Activated CD4-positive, alpha-beta memory T cell treated with anti-CD3 and anti-CD28 coated beads for 36 hours (primary cell): ENCODE measurements at regions of chr6 and their contacts with region 1.

Region 1: DNA sequence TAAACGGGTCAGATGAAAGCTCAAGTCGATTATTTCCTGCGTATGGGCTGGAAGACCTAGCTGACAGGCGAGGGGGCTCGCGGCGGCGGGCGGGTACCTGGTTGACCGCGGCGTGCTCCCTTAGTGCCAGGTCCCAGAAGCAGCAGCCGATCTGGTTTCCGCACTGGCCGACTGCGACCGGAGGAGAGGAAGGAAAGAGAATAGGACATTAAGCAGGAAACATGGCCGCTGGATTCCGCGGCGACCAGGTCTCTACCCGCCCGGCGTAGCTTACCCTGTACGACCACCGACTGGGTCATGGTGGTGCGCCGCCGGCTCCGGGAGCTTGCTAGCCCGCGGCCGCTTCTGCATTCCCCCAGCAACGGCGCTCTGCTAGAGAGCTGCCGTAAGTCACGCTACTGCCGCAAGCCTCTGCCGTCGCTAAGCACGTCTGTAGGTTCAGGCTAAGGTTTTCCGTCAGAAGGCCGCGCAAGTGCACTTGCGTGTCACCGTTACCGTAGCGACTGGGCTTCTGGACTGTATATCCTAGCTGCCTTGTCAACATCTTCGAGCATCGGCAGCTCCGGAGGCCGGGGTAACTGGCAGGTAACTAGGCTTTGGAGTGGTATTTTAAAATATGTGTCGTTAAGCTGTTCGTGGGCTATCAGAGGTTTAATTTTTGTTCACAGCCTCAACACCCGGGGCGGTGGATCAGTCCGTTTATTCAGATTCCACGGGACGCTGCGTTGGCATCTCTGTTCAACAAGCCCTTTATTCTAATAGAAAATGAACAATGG is at the starts of genes FAM229B and TUBE1:
- DNase-seq: peak; percentile 94
- H3K4me3 Mint-ChIP-seq: no peak within 1 kb of the TSS
- H3K27ac Mint-ChIP-seq: no peak within 1 kb of the TSS
- H3K4me1 Mint-ChIP-seq: peaks cover 9% of the 10 kb centered on the region
- H3K27me3 Mint-ChIP-seq: peaks cover 11% of the 10 kb centered on the region
- total RNA-seq, gene FAM229B: 6.7 to 7.3 TPM
- total RNA-seq, gene TUBE1: 37.2 to 39.2 TPM

Region 2: DNA sequence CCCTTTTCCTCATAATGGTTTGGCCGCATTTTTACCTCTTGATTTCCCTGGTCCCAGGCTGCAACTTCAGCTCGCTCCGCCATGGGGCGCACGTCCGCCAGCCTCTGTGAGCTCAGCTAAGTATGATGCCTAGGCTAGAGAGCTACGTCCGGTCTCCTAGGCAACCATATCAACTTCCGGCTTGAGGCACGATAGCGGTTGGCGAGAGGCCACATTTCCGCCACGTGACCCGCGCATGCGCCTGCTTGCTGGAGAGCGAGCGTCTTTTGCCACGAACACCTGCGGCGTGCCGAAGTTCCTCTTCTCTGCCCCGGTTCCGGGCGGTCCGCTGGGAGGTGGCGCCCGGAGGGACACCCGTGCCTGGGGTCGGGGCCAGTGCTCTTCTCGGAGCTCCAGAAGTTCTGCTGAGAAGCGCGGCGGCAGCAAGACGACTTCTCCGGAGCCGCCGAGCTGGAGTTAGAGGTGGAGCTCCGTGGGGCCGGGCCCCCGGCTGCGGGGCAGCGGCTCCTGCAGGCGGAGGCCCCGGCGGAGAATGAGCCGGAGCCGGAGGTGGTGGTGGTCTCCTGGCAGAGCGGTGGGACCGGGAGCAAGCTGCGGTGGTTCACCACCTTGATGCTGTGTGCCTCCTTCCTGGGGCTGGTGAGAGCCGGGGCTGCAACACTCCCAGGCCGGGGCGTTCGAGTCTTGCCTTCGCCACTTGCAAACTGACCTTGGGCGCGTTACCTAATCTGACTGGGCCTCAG is 828.1 kb before region 1 on chr6:
- CTCF ChIA-PET with region 1: interaction called, 9 read pairs
- POLR2A ChIA-PET with region 1: interaction called, 5 read pairs
- intact Hi-C with region 1: loop called (anchors 1 kb)
- DNase-seq: peak; percentile 99
- H3K4me3 Mint-ChIP-seq: peak overlapping the region; percentile 76
- H3K27ac Mint-ChIP-seq: peak overlapping the region; percentile 79
- H3K4me1 Mint-ChIP-seq: peaks cover 31% of the 10 kb centered on the region
- H3K27me3 Mint-ChIP-seq: peaks cover 2% of the 10 kb centered on the region

Region 3: DNA sequence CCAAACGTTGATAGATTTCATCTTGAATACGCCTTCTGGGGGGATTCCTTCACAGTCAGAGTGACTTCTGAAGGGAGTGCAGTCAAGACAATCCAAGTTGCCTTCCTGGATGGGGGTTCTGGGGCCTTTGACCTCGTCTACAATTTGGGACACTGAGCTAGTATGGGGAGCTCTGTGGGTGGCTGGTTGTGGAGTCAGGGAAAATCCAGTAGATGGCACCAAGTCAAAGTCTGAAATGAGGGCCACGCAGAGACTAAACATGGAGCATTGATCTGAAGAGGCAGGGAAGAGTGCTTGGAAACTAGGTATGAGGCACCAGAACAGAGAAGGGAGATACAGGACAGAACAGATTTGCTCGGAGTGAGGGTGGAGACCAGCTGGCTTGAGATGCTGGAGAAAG is 77.0 kb before region 1 on chr6:
- CTCF ChIA-PET with region 1: interaction called, 3 read pairs
- POLR2A ChIA-PET with region 1: no interaction called
- intact Hi-C with region 1: loop called (anchors 2 kb)
- DNase-seq: peak; percentile 49
- H3K4me3 Mint-ChIP-seq: no peak overlapping the region
- H3K27ac Mint-ChIP-seq: no peak overlapping the region
- H3K4me1 Mint-ChIP-seq: peaks cover 32% of the 10 kb centered on the region
- H3K27me3 Mint-ChIP-seq: no peaks in the 10 kb centered on the region

Region 4: GRCh38 chr6:112066606-112067005 is 20.7 kb before region 1 on chr6:
- CTCF ChIA-PET with region 1: interaction called, 15 read pairs
- POLR2A ChIA-PET with region 1: interaction called, 4 read pairs
- intact Hi-C with region 1: no loop called
- DNase-seq: no peak
- H3K4me3 Mint-ChIP-seq: no peak overlapping the region
- H3K27ac Mint-ChIP-seq: no peak overlapping the region
- H3K4me1 Mint-ChIP-seq: no peaks in the 10 kb centered on the region
- H3K27me3 Mint-ChIP-seq: no peaks in the 10 kb centered on the region

Region 5: GRCh38 chr6:112153926-112154607 is 66.7 kb after region 1 on chr6:
- CTCF ChIA-PET with region 1: interaction called, 9 read pairs
- POLR2A ChIA-PET with region 1: no interaction called
- intact Hi-C with region 1: loop called (anchors 2 kb)
- DNase-seq: no peak
- H3K4me3 Mint-ChIP-seq: no peak overlapping the region
- H3K27ac Mint-ChIP-seq: peak overlapping the region; percentile 67
- H3K4me1 Mint-ChIP-seq: peaks cover 25% of the 10 kb centered on the region
- H3K27me3 Mint-ChIP-seq: peaks cover 12% of the 10 kb centered on the region

Region 6: DNA sequence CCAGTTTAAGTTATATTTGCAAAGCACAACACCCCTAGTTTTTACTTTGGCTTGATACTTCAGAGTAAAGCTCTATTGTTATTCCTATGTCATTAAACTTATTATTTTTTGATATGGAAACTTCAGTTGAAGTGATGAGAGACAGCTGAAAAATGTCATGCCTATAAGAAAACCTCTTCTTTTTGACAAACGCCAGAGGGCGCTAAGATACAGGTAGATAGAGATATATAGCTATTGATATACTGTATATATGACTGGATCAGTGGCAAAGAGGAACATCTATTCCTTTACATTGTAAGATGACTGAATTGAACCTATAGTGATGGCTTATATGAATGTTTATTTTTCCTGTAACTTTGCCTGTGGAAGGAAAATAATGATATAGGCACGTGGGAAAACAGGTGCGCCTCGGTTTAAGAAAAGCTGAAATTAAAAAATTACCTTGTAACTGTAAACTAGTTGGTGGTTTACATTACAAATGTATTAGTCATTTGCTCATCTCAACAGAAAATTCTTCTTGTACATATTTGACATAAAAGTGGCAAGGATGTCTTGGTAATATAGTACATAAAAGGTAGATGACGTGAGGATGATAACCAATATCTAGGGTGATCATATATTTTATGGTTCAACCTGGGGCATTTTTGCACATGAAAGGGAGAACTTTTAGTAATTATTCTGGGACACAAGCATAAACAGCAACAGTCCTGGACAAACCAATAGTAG is 92.9 kb after region 1 on chr6:
- CTCF ChIA-PET with region 1: interaction called, 10 read pairs
- POLR2A ChIA-PET with region 1: no interaction called
- intact Hi-C with region 1: no loop called
- DNase-seq: peak; percentile 26
- H3K4me3 Mint-ChIP-seq: no peak overlapping the region
- H3K27ac Mint-ChIP-seq: no peak overlapping the region
- H3K4me1 Mint-ChIP-seq: no peaks in the 10 kb centered on the region
- H3K27me3 Mint-ChIP-seq: peaks cover 16% of the 10 kb centered on the region

Region 7: DNA sequence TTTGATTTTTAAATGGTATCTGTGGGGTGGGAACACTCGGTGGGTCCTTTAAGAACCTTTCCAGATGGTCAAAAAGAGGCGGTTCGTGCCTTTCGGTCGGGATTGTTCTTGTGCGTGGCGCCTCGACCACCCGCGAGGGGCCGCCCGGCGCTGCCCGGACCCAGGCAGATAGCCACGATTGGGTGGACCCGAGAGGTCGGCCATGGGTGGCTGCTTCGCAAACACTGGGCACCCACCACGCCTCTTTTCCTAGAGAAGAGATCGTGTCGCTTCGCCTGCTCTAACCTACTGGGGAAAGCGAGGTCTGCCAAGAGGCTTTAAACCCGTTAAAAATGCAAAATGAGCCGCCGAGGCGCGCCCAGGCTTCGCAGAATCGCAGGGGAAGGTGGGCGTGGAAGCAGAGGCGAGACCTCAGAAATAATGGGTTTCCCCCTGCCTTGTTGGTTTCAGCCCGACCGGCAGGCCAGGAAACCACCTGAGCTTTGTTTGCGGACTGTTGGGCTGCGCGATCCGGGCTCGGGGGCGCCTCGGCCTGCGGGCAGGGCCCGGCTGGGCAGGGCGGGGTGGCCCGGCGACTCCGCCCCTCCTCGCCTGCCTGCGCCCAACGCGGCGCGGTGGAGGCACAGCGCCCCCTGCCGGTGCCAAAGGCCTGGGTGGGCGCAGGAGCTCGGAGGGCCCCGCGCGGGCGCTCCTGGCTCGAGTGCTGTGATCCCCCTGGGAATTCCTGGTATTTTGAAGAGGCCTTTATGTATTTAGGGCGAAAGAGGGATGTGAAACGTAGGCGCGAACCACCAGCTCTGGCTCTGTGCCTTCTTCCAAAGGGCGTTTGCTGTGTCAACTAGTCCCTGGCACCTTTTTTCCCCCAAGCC is 1771.4 kb after region 1 on chr6:
- CTCF ChIA-PET with region 1: interaction called, 3 read pairs
- POLR2A ChIA-PET with region 1: no interaction called
- intact Hi-C with region 1: loop called (anchors 2 kb)
- DNase-seq: peak; percentile 86
- H3K4me3 Mint-ChIP-seq: no peak overlapping the region
- H3K27ac Mint-ChIP-seq: no peak overlapping the region
- H3K4me1 Mint-ChIP-seq: peaks cover 16% of the 10 kb centered on the region
- H3K27me3 Mint-ChIP-seq: peaks cover 30% of the 10 kb centered on the region